AG04449 (cell line): ENCODE measurements at regions of chr15 and their contacts with region 1.

Region 1: GRCh38 chr15:82849556-82850512 is 40.4 kb downstream of the WHAMM start:
- DNase-seq: no peak
- H3K4me3 ChIP-seq: no peak overlapping the region
- CTCF ChIP-seq: peak; percentile 54

Region 2: DNA sequence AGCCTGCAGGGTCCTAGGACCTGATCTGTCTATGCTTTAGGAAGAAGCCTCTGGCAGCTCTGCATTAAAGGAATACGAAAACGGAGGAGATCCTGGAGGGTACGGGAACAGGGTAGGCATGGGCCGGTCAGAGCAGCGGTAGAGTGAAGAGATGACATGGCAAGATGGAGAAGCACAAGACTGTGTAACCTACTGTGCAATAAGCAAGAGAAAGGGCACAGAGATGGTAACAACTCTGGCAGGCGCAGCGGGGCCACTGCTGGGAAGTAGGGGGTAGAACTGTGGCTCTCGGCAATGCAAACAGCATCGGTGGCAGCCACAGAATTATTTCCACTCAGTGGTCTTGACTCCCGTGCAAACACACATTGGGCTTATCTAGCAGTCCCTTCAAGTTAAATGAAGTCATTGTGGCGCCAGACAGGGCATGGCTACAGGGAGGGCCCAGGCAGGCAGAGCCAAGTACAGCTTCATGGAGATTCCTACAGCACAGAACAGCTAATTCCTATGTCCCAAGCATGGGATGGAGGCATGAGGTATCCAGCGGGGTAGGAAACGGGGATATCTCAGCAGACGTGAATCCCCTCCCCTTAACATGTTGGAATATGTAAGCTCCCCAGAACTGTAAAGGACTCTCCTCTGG is 11.6 kb before region 1 on chr15:
- CTCF ChIA-PET with region 1: interaction called, 10 read pairs
- POLR2A ChIA-PET with region 1: no interaction called
- DNase-seq: no peak
- H3K4me3 ChIP-seq: no peak overlapping the region
- CTCF ChIP-seq: no peak

Region 3: DNA sequence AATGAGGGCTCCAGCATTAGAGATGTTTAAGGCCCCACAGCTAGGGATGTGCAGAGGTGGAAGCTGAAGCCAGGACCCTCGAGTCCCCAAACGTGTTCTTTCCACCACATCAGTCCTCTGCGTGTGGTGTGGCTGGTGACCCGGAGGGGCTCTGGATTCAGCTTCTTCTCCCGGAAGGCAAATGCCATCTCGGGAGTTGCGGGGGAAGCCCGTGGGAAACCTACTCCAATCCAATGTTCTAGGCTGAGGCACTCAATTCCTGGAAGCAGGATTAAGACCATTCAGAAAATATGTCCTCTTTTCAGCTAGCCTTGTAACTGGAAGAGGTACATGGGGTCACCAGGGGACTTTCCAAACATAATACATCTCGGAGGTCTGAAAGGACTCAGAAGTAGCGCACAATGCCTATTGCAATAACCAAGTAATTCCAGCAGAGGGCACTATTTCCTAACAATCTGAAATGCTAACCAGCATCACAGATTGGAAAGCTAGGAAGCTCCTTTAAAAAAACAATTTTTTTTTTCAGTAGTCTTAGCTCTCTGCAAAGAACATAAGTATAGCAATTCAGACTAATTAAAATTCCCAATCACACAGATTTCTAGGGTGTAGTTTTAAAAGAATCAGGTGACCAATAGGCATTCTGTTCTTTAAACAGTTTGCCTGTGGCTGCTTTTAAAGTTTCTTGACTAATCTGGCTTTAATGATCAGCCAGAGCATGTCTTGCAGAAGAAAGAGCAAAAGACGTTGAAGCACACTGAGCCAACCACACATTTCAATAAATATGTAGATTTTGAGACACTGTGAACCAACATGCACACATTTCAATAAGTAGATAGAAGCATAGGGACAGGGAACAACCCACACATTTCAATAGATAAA is 398.6 kb after region 1 on chr15:
- CTCF ChIA-PET with region 1: no interaction called
- POLR2A ChIA-PET with region 1: no interaction called
- DNase-seq: peak; percentile 5
- H3K4me3 ChIP-seq: no peak overlapping the region
- CTCF ChIP-seq: peak; percentile 62